Activated CD4-positive, alpha-beta T cell treated with anti-CD3 and anti-CD28 coated beads, Interleukin-2, amount 10 ng/mL, durations not matched to agents 24 days and 14 days (primary cell): ENCODE measurements at regions of chr15 and their contacts with region 1.

Region 1: GRCh38 chr15:63504247-63504978 is at the start of gene USP3:
- DNase-seq: peak; percentile 98
- H3K4me3 Mint-ChIP-seq: peak within 1 kb of the TSS; percentile 97
- H3K27ac Mint-ChIP-seq: peak within 1 kb of the TSS; percentile 97
- H3K4me1 Mint-ChIP-seq: peaks cover 71% of the 10 kb centered on the region
- H3K27me3 Mint-ChIP-seq: no peaks in the 10 kb centered on the region
- total RNA-seq, gene USP3: 46.7 and 49.2 TPM in 2 replicates

Region 2: DNA sequence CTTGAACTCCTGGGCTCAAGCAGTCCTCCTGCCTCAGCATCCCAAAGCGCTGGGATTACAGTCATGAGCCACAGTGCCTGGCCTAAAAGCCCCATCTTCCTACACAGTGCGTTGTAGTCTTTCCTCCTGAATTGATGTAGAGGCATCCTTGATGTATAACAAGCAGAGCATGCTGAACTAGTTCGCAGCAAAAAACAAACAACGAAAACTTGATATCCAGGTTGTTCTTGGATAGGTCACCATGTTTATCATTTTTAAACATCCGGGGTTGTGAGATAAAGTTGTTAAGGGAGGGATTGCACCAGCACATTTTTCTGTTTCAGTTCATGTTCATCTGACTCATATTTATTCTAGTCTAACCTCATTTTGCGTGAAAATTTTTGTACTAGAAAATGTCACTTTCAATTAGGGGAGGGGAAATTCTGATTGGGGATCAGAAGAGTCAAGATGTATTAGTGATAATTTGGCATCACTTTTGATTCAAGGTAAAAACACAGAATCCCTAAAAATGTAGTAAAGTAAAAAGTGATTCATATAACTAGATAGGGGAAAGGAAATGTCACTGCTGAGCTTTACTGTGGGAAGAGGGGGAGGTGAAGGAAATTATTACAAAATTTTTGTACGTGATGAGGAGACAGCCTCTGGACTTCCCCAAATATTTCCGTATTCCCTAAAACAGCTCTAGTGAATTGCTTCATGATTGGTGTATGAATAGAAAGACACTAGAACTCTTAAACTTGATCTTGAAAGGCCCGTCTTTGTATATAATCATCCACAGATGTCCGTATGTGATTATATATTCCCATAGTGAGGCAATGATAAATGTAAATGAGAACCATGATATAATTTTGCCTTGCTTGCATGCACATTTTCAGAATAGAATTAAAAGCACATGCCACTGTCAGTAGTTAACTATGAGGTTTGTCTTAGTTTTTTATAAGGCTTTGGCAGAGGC is 292.1 kb before region 1 on chr15:
- intact Hi-C with region 1: loop called (anchors 5 kb)
- DNase-seq: no peak
- H3K4me3 Mint-ChIP-seq: peak overlapping the region; percentile 56
- H3K27ac Mint-ChIP-seq: peak overlapping the region; percentile 94
- H3K4me1 Mint-ChIP-seq: peaks cover 64% of the 10 kb centered on the region
- H3K27me3 Mint-ChIP-seq: no peaks in the 10 kb centered on the region

Region 3: GRCh38 chr15:63473999-63474809 is 30.2 kb before region 1 on chr15:
- intact Hi-C with region 1: loop called (anchors 1 kb)
- DNase-seq: peak; percentile 85
- H3K4me3 Mint-ChIP-seq: peak overlapping the region; percentile 11
- H3K27ac Mint-ChIP-seq: peak overlapping the region; percentile 95
- H3K4me1 Mint-ChIP-seq: peaks cover 41% of the 10 kb centered on the region
- H3K27me3 Mint-ChIP-seq: no peaks in the 10 kb centered on the region

Region 4: GRCh38 chr15:63553388-63553791 is 49.0 kb after region 1 on chr15:
- intact Hi-C with region 1: loop called (anchors 2 kb)
- DNase-seq: no peak
- H3K4me3 Mint-ChIP-seq: no peak overlapping the region
- H3K27ac Mint-ChIP-seq: no peak overlapping the region
- H3K4me1 Mint-ChIP-seq: peaks cover 21% of the 10 kb centered on the region
- H3K27me3 Mint-ChIP-seq: no peaks in the 10 kb centered on the region

Region 5: GRCh38 chr15:63708126-63708772 is 203.8 kb after region 1 on chr15:
- intact Hi-C with region 1: no loop called
- DNase-seq: peak; percentile 63
- H3K4me3 Mint-ChIP-seq: peak overlapping the region; percentile 1
- H3K27ac Mint-ChIP-seq: peak overlapping the region; percentile 18
- H3K4me1 Mint-ChIP-seq: peaks cover 15% of the 10 kb centered on the region
- H3K27me3 Mint-ChIP-seq: no peaks in the 10 kb centered on the region

Region 6: GRCh38 chr15:64093627-64094417 is 589.4 kb after region 1 on chr15 and contains the start of gene CIAO2A:
- intact Hi-C with region 1: loop called (anchors 10 kb)
- DNase-seq: peak; percentile 98
- H3K4me3 Mint-ChIP-seq: peak within 1 kb of the TSS; percentile 98
- H3K27ac Mint-ChIP-seq: peak within 1 kb of the TSS; percentile 94
- H3K4me1 Mint-ChIP-seq: peaks cover 57% of the 10 kb centered on the region
- H3K27me3 Mint-ChIP-seq: no peaks in the 10 kb centered on the region
- total RNA-seq, gene CIAO2A: 72.3 and 73.0 TPM in 2 replicates